ENCODE measurements at regions of chr11 and their contacts with region 1.

Region 1: DNA sequence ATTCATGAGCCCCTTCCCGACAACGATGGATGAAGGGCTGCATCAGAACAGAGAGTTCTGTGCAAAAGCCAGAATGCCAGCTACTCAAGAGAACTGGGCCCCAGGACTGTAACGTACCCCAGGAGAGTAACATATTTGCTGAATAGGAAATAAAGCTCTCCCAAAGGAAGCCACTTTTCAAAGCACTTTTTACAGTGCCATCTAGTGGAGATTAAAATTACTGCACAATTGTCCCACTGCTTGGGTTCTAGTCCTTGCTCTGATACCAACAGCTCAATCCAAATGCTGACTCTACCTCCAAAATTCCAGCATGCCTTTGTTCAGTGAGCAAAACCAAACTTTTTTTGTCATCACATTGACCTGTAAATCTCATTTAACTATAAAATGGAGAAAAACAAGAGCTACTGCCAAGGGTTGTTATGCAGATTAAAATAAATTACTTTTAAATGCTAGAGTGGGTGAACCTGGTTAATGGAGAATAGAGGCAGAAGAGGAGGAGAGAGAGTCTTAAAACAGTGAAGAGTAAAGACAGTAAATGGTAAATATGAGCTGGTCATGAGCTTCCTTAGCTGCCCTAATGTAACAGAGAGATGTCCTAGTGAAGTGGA is 87.6 kb upstream of the FSHB start:
- DNase-seq: no peak
- H3K4me3 ChIP-seq: no peak overlapping the region
- H3K27me3 ChIP-seq: no peaks in the 10 kb centered on the region
- CTCF ChIP-seq: peak; percentile 67

Region 2: DNA sequence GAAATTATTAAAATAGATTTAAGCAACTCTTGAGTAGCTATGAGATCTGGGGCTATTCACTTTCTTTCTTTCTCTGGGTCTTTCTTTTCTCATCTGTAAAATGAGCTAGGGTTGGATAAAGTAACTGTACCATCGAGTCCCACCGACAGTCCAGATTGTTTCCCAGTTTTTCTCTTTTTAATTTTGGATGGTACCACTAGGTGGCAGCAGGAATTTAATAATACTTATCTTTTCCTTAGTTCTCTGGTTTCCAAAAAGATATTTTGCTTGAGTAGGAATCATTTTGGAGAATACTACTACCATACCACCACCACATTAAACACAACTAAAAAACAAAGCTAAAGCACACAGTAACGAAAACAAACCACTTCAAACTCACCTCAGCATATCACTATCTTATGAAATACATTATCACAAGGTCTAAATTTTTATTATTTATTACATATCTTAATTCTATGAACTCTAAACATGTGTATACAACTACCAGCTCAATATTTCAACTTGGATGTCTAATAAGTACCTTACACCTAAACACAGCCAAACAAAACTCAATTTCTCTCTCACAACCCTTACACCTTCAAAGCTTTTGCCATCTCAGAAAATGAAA is 710.4 kb before region 1 on chr11:
- CTCF ChIA-PET with region 1: interaction called, 14 read pairs
- POLR2A ChIA-PET with region 1: no interaction called
- DNase-seq: no peak
- H3K4me3 ChIP-seq: no peak overlapping the region
- H3K27me3 ChIP-seq: peaks cover 2% of the 10 kb centered on the region; the same call in 1 of the 2 replicates
- CTCF ChIP-seq: peak; percentile 48

Region 3: GRCh38 chr11:30128269-30128932 is 14.8 kb before region 1 on chr11:
- CTCF ChIA-PET with region 1: interaction called, 38 read pairs
- POLR2A ChIA-PET with region 1: no interaction called
- DNase-seq: no peak
- H3K4me3 ChIP-seq: no peak overlapping the region
- H3K27me3 ChIP-seq: no peaks in the 10 kb centered on the region
- CTCF ChIP-seq: peak; percentile 43; the same call in 1 of the 2 replicates

Region 4: DNA sequence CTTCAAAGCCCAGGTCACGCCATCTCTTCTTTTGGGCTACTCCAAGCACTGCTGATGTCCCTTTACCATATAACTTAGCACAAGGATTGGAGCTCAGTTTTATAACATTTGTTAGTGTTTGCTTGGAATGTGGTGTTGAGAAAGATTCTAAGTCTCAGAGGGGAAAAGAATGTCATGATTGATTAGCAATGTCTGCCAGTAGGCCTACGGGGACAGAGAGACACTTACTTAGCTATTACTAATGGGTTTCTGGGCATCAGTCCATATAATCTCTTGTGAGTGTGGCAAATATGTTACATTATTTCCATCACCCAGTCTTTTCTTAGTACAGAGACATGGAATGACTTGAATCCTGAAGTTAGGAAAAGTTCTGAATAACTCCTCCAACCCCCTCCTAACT is 12.2 kb after region 1 on chr11:
- CTCF ChIA-PET with region 1: interaction called, 14 read pairs
- POLR2A ChIA-PET with region 1: no interaction called
- DNase-seq: no peak
- H3K4me3 ChIP-seq: no peak overlapping the region
- H3K27me3 ChIP-seq: no peaks in the 10 kb centered on the region
- CTCF ChIP-seq: no peak